Brain microvascular endothelial cell (primary cell): ENCODE measurements at regions of chr4 and their contacts with region 1.

Region 1: DNA sequence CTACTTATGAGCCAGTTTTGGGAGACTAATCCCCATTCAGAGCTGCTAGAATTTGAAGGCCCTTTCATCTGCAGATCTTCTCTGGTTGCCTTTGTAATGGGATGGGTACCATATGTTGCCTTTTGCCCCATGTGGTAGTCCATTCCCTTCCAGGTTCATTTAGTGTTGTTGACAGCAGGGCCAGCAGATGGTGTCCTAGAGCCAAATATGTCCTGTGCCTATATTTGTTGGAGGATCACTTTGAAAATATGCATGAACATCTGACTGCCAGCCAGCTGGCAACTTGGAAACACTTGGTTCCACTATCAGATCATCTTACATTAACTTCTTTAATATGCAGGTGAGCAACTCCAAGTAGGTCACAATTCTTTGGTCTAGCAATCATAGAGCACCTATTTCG is 30.4 kb downstream of the CFAP299 start:
- DNase-seq: peak; percentile 48
- H3K4me3 ChIP-seq: no peak overlapping the region
- H3K27ac ChIP-seq: no peak overlapping the region
- H3K27me3 ChIP-seq: no peaks in the 10 kb centered on the region
- CTCF ChIP-seq: peak; percentile 88

Region 2: DNA sequence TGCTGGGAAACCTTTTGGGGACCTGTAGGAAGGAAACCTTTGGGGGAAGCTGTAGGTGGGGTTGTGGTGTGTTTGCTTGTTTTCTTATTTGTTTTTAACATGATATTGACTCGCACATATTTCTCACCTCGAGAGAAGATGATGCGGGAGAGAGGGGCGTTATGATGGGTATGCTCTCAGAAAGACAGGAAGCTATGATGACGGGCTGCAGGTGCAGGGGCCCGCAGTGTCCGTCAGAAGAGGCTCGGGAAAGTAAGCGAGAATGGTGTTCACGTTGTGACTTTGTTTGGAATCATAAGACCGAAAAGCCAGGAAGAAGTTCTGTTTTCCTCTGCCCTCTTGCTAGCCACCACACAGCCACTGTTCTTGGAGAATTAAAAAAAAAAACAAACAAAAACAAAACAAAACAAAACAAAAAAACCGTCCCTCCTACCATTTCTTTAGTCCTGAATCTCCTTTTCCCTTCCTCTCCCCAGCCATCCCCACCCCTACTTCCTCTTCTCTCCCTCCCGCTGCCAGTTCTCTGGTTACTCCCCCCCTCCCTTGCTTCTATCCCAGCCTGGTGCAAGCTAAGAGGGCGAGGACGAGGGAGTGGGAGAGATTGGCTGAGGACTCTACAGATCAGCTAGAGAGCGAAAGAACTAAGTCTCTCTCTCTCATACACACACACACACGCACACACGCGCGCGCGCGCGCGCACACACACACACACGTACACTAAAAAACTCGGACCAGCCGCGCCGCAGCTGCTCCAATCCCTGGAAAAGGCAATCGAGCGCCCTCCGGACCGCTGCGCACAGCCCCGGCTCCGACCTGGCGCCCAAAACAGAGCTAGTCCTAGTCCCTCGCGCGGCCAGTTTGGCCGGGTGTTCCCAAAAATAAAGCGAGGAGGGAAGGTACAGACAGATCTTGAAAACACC is 664.4 kb after region 1 on chr4 and contains the start of gene BMP3:
- in situ Hi-C with region 1: loop called (anchors 10 kb)
- DNase-seq: no peak
- H3K4me3 ChIP-seq: peak within 1 kb of the TSS; percentile 41
- H3K27ac ChIP-seq: no peak within 1 kb of the TSS
- H3K27me3 ChIP-seq: peaks cover 29% of the 10 kb centered on the region
- CTCF ChIP-seq: no peak